Activated T-helper 2 cell treated with anti-CD3 and anti-CD28 coated beads, Interferon-gamma antibody, Interleukin-2, Interleukin-4, amounts not matched to agents 10 μg/mL and 5 μg/mL and 100 μg/mL, durations not matched to agents 14 hours and 24 hours and 36 hours (primary cell): ENCODE measurements at regions of chr15 and their contacts with region 1.

Region 1: DNA sequence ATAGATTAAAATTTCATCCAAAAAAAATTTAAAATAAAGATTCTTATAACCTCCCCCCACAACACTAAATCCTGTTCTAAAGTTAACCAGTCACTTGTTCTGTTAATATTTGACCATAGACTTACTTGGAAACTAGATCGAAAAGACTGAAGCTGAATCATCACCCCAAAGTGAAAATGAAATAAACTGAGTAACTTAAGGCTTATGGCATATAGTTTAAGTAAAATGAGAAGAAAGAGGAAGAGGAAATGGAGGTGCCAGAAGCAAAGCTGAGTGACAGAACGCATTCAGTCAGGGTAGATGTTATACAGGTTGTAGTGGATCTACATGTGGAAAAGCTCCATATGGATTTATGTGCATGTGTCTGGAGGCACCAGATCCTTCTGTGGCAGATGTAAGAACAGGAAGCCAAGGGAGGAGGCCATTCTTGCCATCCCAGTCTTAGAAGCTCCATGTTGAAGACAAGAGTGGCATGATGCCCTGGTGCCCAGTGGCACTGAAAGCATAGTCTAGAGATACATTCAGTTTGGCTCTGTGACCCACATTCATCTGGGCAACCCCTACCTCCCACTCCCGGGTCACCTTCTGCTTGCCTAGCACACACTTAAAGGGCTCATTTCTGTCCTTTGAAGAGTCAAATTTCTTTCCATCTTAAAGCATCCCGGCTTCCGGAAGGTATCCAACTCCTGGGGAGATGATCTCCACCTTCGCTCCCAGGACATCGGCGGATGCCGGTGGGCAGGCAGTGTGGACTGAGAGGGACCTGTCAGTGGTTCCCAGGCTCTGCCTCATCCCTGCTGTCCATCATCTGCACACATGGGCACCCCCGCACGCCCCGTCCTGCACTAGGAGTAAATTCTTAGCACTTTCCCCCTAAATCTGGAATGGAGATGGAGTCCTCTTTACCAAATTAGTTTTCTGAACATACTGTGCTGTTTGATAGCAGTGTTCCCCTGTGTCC is 90.8 kb downstream of the NEO1 start:
- DNase-seq: no peak
- H3K4me3 Mint-ChIP-seq: peak overlapping the region; percentile 9
- H3K27ac Mint-ChIP-seq: peak overlapping the region; percentile 90
- H3K4me1 Mint-ChIP-seq: peaks cover 50% of the 10 kb centered on the region
- H3K27me3 Mint-ChIP-seq: no peaks in the 10 kb centered on the region

Region 2: DNA sequence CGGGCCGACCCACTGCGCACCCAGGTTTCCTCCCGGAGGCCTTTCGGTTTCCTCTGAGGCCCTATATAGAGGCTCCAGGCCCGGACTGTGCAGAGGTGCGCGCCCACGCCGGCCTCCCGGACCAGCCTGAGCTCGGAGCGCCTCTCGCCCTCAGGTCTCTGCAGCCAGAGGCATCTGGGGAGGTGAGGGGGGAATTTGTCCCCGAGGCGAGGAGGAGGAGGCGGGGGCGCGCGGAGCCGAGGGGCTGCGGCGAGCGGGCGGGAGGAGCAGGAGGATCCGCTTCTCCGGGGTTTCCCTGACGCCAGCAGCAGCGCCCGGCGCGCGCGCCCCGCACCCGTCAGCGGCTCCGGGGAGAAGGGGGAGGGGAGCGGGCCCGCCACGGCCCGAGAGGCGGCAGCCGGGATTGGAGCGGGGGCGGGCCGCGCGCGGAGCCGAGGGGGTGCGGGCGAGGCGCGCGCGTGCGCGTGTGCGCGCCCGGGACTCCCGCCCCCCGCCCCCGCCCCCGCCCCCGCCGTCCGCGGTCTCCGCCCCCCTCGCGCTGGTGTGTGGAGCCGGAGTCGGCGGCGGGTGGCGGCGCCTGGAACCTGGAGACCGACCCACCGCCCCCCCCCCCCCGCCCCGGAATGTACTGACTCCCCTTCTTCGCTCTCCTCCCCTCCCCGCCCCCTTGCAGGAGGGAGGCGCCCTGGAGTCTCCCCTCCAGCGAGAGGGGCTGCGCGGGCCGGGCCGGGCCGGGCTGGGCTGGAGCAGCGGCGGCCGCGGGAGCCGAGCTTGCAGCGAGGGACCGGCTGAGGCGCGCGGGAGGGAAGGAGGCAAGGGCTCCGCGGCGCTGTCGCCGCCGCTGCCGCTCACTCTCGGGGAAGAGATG is 91.0 kb before region 1 on chr15 and contains the start of gene NEO1:
- intact Hi-C with region 1: loop called (anchors 5 kb)
- DNase-seq: peak; percentile 71
- H3K4me3 Mint-ChIP-seq: peak within 1 kb of the TSS; percentile 78
- H3K27ac Mint-ChIP-seq: peak within 1 kb of the TSS; percentile 51
- H3K4me1 Mint-ChIP-seq: peaks cover 11% of the 10 kb centered on the region
- H3K27me3 Mint-ChIP-seq: peaks cover 33% of the 10 kb centered on the region
- total RNA-seq, gene NEO1: 9.8 and 12.5 TPM in 2 replicates

Region 3: DNA sequence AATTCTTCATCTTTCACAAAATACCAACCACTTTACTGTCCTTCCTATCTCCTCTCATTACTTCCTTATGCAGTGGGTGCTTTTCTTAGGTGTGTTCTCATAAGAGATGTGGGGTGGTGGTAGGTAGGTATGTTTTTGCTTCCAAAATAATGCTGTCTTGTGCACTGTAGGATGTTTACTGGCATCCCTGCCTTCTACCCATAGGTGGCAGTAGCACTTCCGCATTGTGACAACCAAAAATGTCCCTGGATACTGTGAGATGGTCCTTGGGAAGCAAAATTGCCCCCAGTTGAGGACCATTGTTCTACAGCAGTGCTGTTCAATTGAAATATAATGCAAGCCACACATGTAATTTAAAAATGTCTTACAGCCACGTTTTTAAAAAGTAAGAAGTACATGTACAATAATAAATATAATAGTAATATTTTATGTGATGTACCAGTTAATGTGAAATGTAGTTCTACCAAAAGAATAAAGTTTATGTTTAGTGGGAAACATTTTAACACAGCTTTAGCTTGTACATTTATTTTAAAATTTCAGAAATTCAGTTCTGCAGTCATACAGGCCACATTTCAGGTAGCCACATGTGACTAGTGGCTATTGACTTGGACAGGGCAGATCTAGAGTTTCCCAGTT is 15.7 kb before region 1 on chr15:
- intact Hi-C with region 1: loop called (anchors 2 kb)
- DNase-seq: no peak
- H3K4me3 Mint-ChIP-seq: no peak overlapping the region
- H3K27ac Mint-ChIP-seq: peak overlapping the region; percentile 26
- H3K4me1 Mint-ChIP-seq: peaks cover 19% of the 10 kb centered on the region
- H3K27me3 Mint-ChIP-seq: no peaks in the 10 kb centered on the region

Region 4: GRCh38 chr15:73225358-73226015 is 82.4 kb after region 1 on chr15:
- intact Hi-C with region 1: loop called (anchors 5 kb)
- DNase-seq: no peak
- H3K4me3 Mint-ChIP-seq: no peak overlapping the region
- H3K27ac Mint-ChIP-seq: peak overlapping the region; percentile 14
- H3K4me1 Mint-ChIP-seq: peaks cover 33% of the 10 kb centered on the region
- H3K27me3 Mint-ChIP-seq: no peaks in the 10 kb centered on the region

Region 5: DNA sequence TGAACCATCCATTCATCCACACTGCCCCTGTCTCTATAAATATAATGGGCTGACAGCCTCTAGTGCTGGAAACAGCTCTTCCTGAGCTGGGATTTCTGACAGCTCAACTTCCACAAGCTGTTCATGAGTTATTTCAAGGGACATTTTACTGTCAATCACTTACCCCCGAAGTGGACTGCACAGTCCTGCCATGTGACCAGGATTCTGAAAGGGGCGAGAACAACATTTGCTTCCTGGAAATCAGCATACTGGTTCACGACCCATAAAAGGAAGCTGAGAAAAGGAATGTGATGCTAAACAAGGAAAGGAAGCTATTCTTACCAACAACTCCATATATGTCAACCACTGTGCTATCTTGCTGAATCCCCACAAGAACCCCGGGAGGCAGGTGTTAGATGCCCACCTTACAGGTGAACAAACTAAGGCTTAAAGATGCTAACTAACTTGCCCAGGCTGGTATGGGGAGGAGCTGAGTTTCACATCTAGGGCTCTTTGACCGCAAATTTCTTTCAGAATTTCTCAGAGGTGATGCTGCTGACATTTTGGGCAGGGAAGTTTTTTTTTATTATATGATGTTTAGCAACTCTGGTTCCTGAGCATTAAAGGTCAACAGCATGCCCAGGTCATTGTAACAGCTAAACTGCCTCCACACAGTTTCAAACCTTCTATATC is 283.4 kb after region 1 on chr15:
- intact Hi-C with region 1: no loop called
- DNase-seq: no peak
- H3K4me3 Mint-ChIP-seq: no peak overlapping the region
- H3K27ac Mint-ChIP-seq: no peak overlapping the region
- H3K4me1 Mint-ChIP-seq: peaks cover 5% of the 10 kb centered on the region
- H3K27me3 Mint-ChIP-seq: peaks cover 14% of the 10 kb centered on the region

Region 6: DNA sequence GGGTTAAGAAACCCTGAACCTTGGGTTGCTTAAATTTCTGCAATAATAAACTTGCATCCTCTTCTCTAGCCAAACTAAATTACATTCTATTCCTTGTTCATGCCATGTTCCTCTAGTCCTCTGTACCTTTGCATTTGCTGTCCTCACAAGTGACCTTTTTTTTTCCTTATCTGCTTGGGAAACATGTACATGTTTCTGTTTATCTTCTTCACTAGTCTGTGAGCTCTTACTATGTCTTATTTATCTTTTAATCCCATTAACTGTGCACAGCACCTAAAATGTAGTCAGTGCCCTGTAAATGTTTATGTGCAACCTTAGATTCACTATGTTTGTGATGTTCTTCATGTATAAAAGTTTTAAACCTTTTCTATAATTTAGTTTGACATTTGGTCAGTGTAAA is 361.8 kb after region 1 on chr15:
- intact Hi-C with region 1: no loop called
- DNase-seq: no peak
- H3K4me3 Mint-ChIP-seq: no peak overlapping the region
- H3K27ac Mint-ChIP-seq: no peak overlapping the region
- H3K4me1 Mint-ChIP-seq: no peaks in the 10 kb centered on the region
- H3K27me3 Mint-ChIP-seq: peaks cover 20% of the 10 kb centered on the region